ENCODE measurements at regions of chr1 and their contacts with region 1.

Region 1: GRCh38 chr1:32240140-32240951 is 6.7 kb upstream of the FAM167B start:
- DNase-seq: peak; percentile 39
- ATAC-seq: peak; percentile 57
- H3K4me3 ChIP-seq: peak overlapping the region; percentile 51
- H3K27ac ChIP-seq: peak overlapping the region; percentile 45
- H3K4me1 ChIP-seq: peaks cover 12% of the 10 kb centered on the region
- H3K27me3 ChIP-seq: no peaks in the 10 kb centered on the region
- CTCF ChIP-seq: 0 out of 2 replicates have a peak, but pooled peaks have one; percentile 18
- POLR2A ChIP-seq: 0 out of 2 replicates have a peak, but pooled peaks have one; percentile 14
- RAD21 ChIP-seq: no peak

Region 2: GRCh38 chr1:32311709-32312393 is 71.5 kb after region 1 on chr1:
- CTCF ChIA-PET with region 1: interaction called, 3 read pairs
- POLR2A ChIA-PET with region 1: no interaction called
- dilution Hi-C with region 1: no loop called
- in situ Hi-C with region 1: no loop called
- intact Hi-C with region 1: loop called (anchors 5 kb)
- DNase-seq: no peak
- ATAC-seq: no peak; the same call in 1 of the 2 replicates
- H3K4me3 ChIP-seq: no peak overlapping the region
- H3K27ac ChIP-seq: no peak overlapping the region
- H3K4me1 ChIP-seq: peaks cover 5% of the 10 kb centered on the region
- H3K27me3 ChIP-seq: no peaks in the 10 kb centered on the region
- CTCF ChIP-seq: no peak
- POLR2A ChIP-seq: no peak
- RAD21 ChIP-seq: no peak

Region 3: DNA sequence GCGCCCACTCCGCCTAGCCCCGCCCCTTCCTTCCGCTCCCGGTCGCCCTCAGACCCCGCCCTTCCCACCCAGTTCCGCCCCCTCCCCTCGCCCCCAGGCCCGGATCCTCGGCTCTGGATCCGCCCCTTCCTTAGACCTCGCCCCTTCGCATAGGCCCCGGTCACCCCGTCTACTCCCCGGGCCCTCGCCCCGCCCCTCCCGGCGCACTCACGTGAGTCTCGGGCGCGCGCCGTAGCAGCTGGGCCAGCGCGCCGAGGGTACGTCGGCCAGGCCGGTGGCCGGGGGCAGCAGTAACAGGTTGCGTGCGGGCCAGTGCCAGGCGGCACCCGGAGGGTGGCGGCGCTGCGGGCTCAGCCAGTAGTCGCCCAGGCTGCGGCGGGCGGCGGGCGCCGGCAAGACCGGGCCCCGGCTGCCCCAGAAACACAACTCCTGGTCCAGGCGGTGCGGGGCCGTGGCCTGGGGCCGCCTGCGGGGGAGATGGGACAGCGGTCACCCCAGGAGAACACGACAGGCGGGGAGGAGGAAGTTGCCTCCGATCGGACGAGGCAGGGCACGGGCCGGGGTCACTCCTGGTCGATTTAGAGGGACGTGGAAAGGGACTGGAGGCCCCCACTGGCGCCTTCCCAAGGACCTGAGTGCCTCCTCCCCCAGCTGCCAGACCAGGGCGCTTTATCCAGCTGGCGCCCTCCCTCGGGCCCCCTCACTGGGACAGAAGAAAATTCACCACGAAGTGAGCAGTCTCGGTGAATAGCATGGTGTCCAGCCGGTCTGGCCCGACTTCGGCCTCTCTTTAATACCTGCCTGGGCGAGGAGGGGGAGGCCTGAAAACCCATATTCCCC is 111.3 kb after region 1 on chr1:
- CTCF ChIA-PET with region 1: no interaction called
- POLR2A ChIA-PET with region 1: no interaction called
- dilution Hi-C with region 1: no loop called
- in situ Hi-C with region 1: no loop called
- intact Hi-C with region 1: no loop called
- DNase-seq: peak; percentile 88
- ATAC-seq: peak; percentile 91
- H3K4me3 ChIP-seq: peak overlapping the region; percentile 85
- H3K27ac ChIP-seq: peak overlapping the region; percentile 95
- H3K4me1 ChIP-seq: peaks cover 26% of the 10 kb centered on the region
- H3K27me3 ChIP-seq: no peaks in the 10 kb centered on the region
- CTCF ChIP-seq: no peak
- POLR2A ChIP-seq: peak; percentile 85
- RAD21 ChIP-seq: 0 out of 2 replicates have a peak, but pooled peaks have one; percentile 12

Region 4: DNA sequence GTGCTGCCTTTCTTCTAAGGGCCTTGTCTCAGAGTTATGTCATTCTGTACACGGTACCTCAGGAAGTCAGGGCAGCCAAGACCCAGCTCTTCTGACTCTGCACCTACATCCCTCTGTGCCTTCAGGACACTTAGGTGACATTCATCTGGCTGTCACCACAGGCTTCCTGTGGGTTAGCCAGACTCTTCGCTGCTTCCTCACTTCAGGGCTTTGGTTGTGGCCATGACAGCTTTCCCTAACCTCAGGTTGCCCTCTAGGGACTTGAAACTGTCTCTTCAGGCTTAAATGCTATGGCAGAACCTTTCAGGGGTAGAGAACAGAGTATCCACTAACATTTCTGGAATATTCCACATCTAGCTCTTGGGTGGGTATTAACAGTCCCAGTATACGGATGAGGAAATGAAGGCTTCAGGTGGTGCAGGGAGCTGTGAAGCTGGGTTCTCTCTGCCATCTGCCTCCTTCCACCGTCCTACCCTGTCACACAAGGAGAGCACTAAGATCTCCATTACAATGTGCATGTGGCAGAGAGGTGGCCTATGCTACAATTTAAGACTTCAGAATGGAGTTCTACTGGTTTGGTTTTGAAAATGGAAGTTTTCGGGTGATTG is 131.9 kb after region 1 on chr1:
- CTCF ChIA-PET with region 1: no interaction called
- POLR2A ChIA-PET with region 1: no interaction called
- dilution Hi-C with region 1: no loop called
- in situ Hi-C with region 1: no loop called
- intact Hi-C with region 1: no loop called
- DNase-seq: no peak
- ATAC-seq: peak; percentile 38
- H3K4me3 ChIP-seq: no peak overlapping the region
- H3K27ac ChIP-seq: no peak overlapping the region
- H3K4me1 ChIP-seq: no peaks in the 10 kb centered on the region
- H3K27me3 ChIP-seq: no peaks in the 10 kb centered on the region
- CTCF ChIP-seq: peak; percentile 22; the same call in 1 of the 2 replicates
- POLR2A ChIP-seq: no peak
- RAD21 ChIP-seq: peak; percentile 30; the same call in 1 of the 2 replicates